ENCODE measurements at regions of chr7 and their contacts with region 1.

Region 1: GRCh38 chr7:133076142-133076541 is 5.7 kb downstream of the CHCHD3 start:
- DNase-seq: no peak
- ATAC-seq: no peak

Region 2: DNA sequence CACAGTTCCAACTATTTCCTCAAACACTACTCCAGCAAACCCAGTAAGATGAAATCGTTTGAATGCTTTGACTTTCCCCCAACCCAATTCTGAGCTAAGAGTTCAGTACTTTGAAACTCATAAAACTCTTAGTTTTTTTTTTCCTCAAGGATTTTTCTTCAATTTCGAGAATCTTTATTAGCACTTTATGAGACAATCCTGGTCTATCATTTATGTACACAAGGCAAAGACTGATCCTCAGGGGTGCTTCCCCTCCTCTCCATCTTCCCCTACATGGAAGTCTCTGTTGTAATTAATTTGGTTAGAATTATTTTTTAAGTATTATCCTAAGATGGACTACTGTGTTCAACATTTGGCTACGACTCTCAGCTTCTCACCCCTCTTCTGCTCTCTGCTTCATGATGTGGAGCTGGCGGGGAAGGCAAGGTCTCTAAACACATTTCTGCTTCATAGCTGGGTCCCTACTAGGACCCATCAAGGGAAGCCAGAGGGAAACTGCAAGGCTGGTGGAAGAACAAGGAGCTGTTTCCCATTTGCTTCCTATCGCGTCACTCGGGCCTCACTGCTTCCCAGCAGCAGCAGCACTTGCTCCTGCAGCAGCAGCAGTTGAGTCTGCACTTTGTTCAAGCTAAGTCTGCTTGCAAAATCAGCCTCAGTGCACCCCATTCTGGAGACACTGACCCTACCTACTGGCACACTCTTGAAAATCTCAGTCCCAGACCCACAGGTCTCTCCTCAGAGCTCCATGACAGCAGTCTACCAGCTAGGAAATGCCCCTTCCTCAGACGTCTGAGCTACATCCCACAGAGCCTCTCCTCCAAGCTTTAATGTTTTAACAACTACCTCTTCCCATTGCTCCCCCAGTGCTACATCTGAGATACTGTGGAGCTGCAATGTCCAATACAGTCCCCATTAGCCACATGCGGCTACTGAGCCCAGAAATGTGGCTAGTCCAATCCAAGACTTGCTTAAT is 84.2 kb before region 1 on chr7:
- intact Hi-C with region 1: no loop called
- DNase-seq: no peak
- ATAC-seq: no peak

Region 3: GRCh38 chr7:133040674-133041073 is 35.5 kb before region 1 on chr7:
- intact Hi-C with region 1: loop called (anchors 1 kb)
- DNase-seq: no peak
- ATAC-seq: no peak